Activated CD4-positive, alpha-beta memory T cell treated with anti-CD3 and anti-CD28 coated beads, Interleukin-2, amount 10 ng/mL, durations not matched to agents 7 days and 5 days (primary cell): ENCODE measurements at regions of chr1 and their contacts with region 1.

Region 1: GRCh38 chr1:89843281-89844121 is 22.7 kb downstream of the LRRC8D start:
- DNase-seq: peak; percentile 81
- H3K4me3 Mint-ChIP-seq: peak overlapping the region; percentile 95
- H3K27ac Mint-ChIP-seq: peak overlapping the region; percentile 84
- H3K4me1 Mint-ChIP-seq: peaks cover 68% of the 10 kb centered on the region
- H3K27me3 Mint-ChIP-seq: no peaks in the 10 kb centered on the region

Region 2: DNA sequence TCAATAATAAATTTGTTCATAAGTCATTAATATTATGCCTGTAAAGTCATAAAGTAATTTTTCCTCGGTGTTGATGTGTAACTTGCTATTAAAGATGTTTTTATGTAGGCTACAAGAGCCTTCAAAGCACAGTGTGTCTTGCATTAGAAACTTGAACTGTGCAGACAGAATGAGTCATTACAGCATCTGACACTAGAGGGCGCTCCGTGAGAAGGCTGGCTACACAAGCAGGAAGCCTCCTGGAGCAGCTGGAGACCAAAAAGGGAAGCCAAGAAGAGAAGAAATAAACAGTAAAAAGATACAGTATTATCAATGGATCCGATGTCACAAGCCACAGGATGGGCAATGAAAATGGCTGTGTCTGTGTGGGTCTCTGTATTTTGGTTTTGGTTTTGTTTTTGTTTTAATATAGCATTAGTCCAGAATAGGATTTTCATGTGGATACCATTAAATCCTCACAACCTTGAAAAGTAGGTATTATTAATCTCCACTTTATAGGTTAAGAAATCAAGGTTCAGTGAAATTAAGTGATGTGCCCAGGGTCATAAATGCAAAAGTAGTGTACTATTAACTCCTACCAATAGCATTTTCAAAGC is 38.8 kb before region 1 on chr1:
- CTCF ChIA-PET with region 1: interaction called, 6 read pairs
- POLR2A ChIA-PET with region 1: interaction called, 10 read pairs
- DNase-seq: peak; percentile 87
- H3K4me3 Mint-ChIP-seq: no peak overlapping the region
- H3K27ac Mint-ChIP-seq: no peak overlapping the region
- H3K4me1 Mint-ChIP-seq: peaks cover 4% of the 10 kb centered on the region
- H3K27me3 Mint-ChIP-seq: peaks cover 2% of the 10 kb centered on the region

Region 3: DNA sequence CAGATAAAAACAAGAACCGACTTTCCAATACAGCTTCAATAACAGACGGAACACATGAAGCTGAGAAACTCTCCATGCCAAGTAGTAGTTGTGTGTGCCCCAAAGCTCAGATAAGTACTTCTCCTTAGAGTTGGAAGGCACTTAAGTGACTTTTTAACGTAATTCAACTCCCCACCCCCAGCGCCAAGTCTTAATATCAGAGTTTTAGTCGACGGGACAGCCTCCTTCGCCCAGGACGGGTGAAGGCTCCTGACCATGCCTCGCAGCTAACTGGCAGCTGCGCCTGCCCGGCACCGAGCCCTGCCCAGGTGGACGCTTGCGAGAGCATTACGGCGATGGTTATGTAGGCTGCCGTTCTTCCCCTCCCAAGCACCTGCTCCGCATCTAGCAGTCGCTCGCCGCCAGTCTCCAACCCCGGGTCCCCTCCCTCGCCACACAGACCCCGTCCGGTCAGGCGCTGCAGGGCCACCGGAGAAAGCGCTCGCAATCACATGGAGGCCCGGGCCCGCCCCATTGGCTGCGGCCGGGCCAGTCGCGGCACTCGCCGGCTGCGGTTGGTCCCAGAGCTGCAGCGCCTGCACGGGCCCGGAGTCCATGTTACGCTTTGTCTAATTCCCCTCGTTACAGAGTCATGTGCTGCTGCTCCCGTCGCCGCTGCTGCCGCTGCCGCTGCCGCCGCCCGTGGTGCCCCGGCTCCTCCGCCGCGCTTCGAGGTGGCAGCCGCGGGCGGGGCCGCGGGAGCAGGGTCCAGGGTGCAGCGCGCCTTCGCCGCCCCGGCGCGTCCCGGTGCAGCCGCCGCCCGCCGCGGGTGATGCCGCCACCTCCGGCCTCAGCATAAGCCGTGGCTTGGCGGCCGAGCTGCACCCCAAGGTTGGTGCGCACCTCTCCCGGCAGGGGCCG is 22.8 kb before region 1 on chr1 and contains the start of gene LRRC8D:
- CTCF ChIA-PET with region 1: interaction called, 13 read pairs
- POLR2A ChIA-PET with region 1: interaction called, 38 read pairs
- DNase-seq: peak; percentile 72
- H3K4me3 Mint-ChIP-seq: peak within 1 kb of the TSS; percentile 76
- H3K27ac Mint-ChIP-seq: peak within 1 kb of the TSS; percentile 44
- H3K4me1 Mint-ChIP-seq: peaks cover 22% of the 10 kb centered on the region
- H3K27me3 Mint-ChIP-seq: peaks cover 11% of the 10 kb centered on the region
- total RNA-seq, gene LRRC8D: 19.4 to 20.3 TPM

Region 4: DNA sequence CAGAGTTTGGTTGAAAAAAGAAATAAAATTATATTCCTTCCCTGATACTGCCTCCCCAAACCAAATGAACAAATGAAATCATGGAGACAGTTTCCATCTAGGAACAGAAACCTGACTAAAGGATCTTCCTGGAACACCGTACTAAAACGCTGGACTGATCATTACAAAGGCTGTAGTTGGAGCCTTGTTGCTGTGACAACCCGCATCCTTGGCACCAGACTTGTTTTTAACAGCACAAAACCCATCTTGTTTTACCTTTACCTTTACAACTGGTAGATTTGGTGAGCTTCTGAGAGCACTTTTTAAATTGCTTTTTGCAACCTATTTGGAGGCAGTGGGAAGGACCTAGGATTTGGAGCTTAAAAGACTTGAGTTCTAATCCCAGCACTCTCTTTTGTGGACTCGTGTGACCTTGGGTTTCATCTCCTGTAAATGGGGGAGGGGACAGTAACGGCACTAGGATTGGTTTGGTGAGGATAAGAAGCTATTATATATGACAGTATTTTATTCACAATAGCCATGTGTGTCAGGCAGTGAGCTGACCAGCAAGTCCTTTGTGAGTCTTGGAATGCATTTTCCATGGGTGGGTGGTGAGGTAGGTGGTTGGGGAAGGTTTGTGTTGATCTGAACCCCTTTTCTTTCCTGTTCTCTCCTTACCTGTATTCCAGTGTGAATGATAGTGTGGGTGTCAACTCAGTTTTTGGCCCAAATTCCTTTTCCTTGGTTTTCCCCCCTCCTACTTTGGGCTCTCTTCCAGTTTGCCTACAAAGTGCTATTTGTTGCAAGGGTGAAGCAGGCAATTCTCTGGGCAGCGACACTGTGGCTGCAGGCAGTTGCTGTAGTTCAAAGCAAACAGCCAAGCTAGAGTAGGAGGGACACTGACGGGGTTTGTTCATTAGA is 10.1 kb before region 1 on chr1:
- CTCF ChIA-PET with region 1: interaction called, 15 read pairs
- POLR2A ChIA-PET with region 1: interaction called, 4 read pairs
- DNase-seq: no peak
- H3K4me3 Mint-ChIP-seq: no peak overlapping the region
- H3K27ac Mint-ChIP-seq: no peak overlapping the region
- H3K4me1 Mint-ChIP-seq: peaks cover 2% of the 10 kb centered on the region
- H3K27me3 Mint-ChIP-seq: peaks cover 3% of the 10 kb centered on the region

Region 5: DNA sequence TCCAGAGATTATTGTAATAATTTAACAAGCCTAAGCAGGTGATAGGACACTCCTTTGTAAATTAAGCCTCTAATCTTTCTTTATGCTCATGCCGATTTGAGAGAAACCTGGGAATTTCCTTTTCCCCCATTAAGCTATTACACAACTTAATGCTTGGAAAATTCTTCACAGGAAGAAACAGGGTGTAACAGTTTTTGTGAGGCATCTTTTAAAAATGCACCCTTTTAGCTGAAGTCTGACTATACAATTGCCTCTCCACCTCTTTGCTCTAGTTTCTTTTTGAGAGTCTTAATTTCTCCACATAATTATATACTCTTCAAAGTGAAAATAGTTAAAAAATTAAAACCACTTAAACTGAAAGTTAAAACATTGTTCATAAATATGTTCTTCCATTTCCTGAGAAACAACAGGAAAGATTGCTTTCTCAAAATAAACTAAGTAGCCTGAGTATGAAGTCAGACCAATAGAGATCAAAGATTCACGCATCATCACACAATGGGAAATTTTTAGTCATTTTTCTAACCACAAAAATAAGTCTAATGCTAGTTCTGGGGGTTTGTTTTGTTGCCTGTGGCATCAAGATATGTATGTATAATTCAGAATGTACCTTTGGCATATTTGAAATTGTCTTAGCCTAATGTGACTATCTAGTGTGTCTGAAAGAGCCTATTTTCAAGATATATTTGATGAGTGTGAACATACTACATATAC is 12.1 kb after region 1 on chr1:
- CTCF ChIA-PET with region 1: interaction called, 17 read pairs
- POLR2A ChIA-PET with region 1: interaction called, 9 read pairs
- DNase-seq: no peak
- H3K4me3 Mint-ChIP-seq: peak overlapping the region; percentile 18
- H3K27ac Mint-ChIP-seq: peak overlapping the region; percentile 63
- H3K4me1 Mint-ChIP-seq: peaks cover 3% of the 10 kb centered on the region
- H3K27me3 Mint-ChIP-seq: no peaks in the 10 kb centered on the region

Region 6: GRCh38 chr1:89987170-89987819 is 143.8 kb after region 1 on chr1:
- CTCF ChIA-PET with region 1: interaction called, 12 read pairs
- POLR2A ChIA-PET with region 1: interaction called, 5 read pairs
- DNase-seq: peak; percentile 53
- H3K4me3 Mint-ChIP-seq: no peak overlapping the region
- H3K27ac Mint-ChIP-seq: no peak overlapping the region
- H3K4me1 Mint-ChIP-seq: peaks cover 2% of the 10 kb centered on the region
- H3K27me3 Mint-ChIP-seq: peaks cover 15% of the 10 kb centered on the region